ENCODE measurements at regions of chr9 and their contacts with region 1.

Region 1: GRCh38 chr9:128927731-128928411 is 7.1 kb downstream of the PHYHD1 start:
- DNase-seq: peak; percentile 23 to 78 (median 47)
- ATAC-seq: peak; percentile 63 to 85
- H3K4me3 Mint-ChIP-seq: no peak overlapping the region
- H3K27ac Mint-ChIP-seq: peak overlapping the region in 7 of 10 donors; percentile 3 to 49 (median 18)
- H3K4me1 Mint-ChIP-seq: peaks cover 8 to 20% (median 14%) of the 10 kb centered on the region in 4 donors
- H3K27me3 Mint-ChIP-seq: no peaks in the 10 kb centered on the region

Region 2: DNA sequence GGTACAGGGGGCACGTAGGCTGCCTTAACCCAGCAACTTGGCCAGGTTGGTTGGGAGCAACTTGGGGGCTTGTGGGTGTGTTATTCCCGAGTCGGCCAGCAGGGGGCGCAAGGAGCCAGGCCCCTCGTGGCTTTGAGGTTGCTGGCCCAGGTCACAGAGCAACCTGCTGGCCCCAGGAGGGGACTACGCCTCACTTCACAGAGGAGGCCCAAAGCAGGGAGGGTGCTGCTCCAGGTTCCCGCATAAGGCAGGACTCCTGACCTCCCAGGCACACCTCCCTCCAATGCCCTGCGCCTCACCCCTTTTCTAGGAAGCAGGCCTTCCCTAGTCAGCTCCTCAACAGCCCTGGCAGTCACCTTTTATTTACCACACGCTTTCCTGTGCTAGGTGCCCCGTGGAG is 64.2 kb before region 1 on chr9:
- POLR2A ChIA-PET with region 1: interaction called, 12 read pairs
- DNase-seq: peak; percentile 68 to 90 (median 82)
- ATAC-seq: peak; percentile 98
- H3K4me3 Mint-ChIP-seq: no peak overlapping the region
- H3K27ac Mint-ChIP-seq: peak overlapping the region in 8 of 10 donors; percentile 29 to 85 (median 58)
- H3K4me1 Mint-ChIP-seq: peaks cover 4 to 8% (median 6%) of the 10 kb centered on the region in 4 donors
- H3K27me3 Mint-ChIP-seq: no peaks in the 10 kb centered on the region